ENCODE measurements at regions of chr13 and their contacts with region 1.

Region 1: DNA sequence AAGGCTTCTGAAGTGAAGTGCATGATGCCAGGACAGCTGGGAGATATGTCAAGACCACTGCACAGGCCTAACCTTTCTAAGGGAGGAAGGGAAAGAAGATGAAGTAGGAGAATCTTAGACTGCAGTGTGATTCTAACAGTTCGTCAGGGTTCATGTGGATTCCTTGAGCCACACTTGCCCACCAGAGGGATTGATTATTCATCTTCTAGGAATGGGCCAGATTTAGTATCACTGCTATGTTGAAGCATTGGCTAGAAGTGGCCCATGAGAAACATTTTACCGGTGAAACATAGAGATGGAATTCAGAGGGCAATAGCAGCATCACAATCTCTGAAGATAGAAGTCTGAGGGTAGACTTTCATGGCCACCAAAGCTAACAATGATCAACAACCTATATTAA is 550.8 kb upstream of the SLITRK1 start:
- DNase-seq: no peak
- ATAC-seq: no peak
- H3K4me3 ChIP-seq: no peak overlapping the region
- H3K4me3 Mint-ChIP-seq: no peak overlapping the region
- H3K27ac ChIP-seq: no peak overlapping the region
- H3K27ac Mint-ChIP-seq: no peak overlapping the region
- H3K4me1 ChIP-seq: no peaks in the 10 kb centered on the region
- H3K4me1 Mint-ChIP-seq: no peaks in the 10 kb centered on the region
- H3K27me3 ChIP-seq: no peaks in the 10 kb centered on the region
- H3K27me3 Mint-ChIP-seq: no peaks in the 10 kb centered on the region

Region 2: DNA sequence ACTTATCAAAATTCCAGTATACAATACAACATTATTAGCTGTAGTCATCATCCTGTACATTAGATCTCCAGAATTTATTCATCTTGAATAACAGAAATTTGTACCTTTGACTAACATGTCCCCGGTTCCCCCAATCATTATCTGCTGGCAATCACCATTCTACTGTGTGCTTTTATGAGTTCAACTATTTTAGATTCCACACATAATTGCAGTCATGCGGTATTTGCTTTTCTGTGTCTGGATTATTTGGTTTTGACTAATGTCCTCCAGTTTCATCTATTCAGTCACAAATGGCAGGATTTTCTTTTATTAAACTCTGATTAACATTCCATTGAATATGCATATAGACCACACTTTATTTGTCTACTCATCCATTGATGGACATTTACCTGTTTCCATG is 20.0 kb before region 1 on chr13:
- CTCF ChIA-PET with region 1: no interaction called
- POLR2A ChIA-PET with region 1: no interaction called
- intact Hi-C with region 1: loop called in 1 of 2 experiments (anchors 2 kb)
- DNase-seq: no peak
- ATAC-seq: no peak
- H3K4me3 ChIP-seq: no peak overlapping the region
- H3K4me3 Mint-ChIP-seq: no peak overlapping the region
- H3K27ac ChIP-seq: no peak overlapping the region
- H3K27ac Mint-ChIP-seq: no peak overlapping the region
- H3K4me1 ChIP-seq: no peaks in the 10 kb centered on the region
- H3K4me1 Mint-ChIP-seq: no peaks in the 10 kb centered on the region
- H3K27me3 ChIP-seq: no peaks in the 10 kb centered on the region
- H3K27me3 Mint-ChIP-seq: no peaks in the 10 kb centered on the region

Measured in naive thymus-derived CD4-positive, alpha-beta T cell (primary cell).